ENCODE measurements at regions of chr11 and their contacts with region 1.

Region 1: DNA sequence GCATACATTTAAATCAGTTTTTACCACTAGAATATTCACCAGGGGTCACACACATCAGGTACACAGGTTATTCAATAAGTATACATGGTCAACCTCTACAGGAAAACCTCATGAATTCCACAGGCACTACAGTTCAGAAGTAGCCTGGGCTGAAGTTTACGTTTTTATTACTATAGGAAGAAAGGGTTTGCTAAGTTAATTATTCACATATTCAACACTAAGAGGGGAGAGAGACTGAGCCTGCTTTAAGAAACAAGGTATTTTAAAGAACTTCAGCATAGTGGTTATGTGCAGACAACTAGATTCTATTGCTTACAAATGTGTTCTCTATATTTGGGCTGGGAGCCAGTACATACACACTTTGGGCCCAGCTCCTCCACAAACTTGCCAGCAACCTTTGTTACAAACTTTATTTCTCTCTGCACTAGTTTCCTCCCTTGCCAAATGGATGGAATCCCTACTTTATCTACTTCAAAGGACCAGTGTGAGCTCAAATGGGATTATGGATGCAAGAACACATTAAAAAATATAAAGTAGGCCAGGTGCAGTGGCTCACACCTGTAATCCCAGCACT is 31.9 kb downstream of the IL18BP start:
- DNase-seq: no peak
- ATAC-seq: no peak
- H3K4me3 ChIP-seq: no peak overlapping the region
- H3K27ac ChIP-seq: no peak overlapping the region
- H3K4me1 ChIP-seq: peaks cover 8% of the 10 kb centered on the region
- CTCF ChIP-seq: no peak
- EP300 ChIP-seq: no peak
- POLR2A ChIP-seq: no peak
- RAD21 ChIP-seq: no peak

Region 2: DNA sequence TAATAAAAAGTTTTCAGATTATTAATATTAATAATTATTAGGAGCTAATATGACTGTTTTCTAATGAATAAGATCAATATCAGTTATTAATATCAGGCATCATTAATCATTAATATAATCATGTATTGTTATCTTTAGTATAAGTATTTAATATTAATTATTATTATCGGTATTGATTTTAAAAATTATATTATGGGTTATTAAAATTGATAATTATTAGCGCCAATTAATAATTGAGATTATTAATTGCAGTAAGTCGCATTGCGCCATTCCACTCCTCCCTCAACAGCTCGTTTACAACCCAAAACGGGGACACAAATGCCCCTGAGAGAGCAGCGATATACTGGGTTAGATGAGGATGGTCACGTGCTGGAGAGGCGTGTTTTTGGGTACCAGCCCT is 122.3 kb before region 1 on chr11:
- CTCF ChIA-PET with region 1: no interaction called
- POLR2A ChIA-PET with region 1: no interaction called
- DNase-seq: no peak
- ATAC-seq: no peak
- H3K4me3 ChIP-seq: no peak overlapping the region
- H3K27ac ChIP-seq: no peak overlapping the region
- H3K4me1 ChIP-seq: no peaks in the 10 kb centered on the region
- CTCF ChIP-seq: no peak
- EP300 ChIP-seq: no peak
- POLR2A ChIP-seq: no peak
- RAD21 ChIP-seq: no peak

Region 3: GRCh38 chr11:71934213-71934612 is 96.3 kb before region 1 on chr11:
- CTCF ChIA-PET with region 1: no interaction called
- POLR2A ChIA-PET with region 1: no interaction called
- DNase-seq: no peak
- ATAC-seq: peak; percentile 43 to 55; a peak in 4 of 6 replicates
- H3K4me3 ChIP-seq: no peak overlapping the region
- H3K27ac ChIP-seq: peak overlapping the region; percentile 39 to 83; a peak in 5 of 6 replicates
- H3K4me1 ChIP-seq: peaks cover 94% of the 10 kb centered on the region
- CTCF ChIP-seq: no peak
- EP300 ChIP-seq: no peak
- POLR2A ChIP-seq: no peak
- RAD21 ChIP-seq: no peak

Region 4: DNA sequence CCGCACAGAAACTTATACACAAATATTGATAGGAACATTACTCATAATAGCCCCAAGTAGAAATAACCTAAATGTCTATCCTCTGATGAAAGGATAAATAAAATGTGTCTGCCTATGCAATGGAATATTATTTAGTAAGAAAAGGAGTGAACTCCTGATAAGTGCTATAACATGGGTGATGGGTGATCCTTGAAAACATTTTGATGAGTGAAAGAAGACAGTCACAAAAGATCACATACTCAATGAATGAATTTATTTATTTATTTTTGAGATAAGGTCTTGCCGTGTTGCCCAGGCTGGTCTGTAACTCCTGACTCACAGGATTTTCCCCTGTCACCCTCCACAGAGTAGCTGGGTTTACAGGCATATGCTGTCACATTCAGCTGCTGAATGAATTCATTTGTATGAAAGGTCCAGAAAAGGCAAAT is 84.4 kb before region 1 on chr11:
- CTCF ChIA-PET with region 1: no interaction called
- POLR2A ChIA-PET with region 1: no interaction called
- DNase-seq: peak; percentile 53 to 77
- ATAC-seq: peak; percentile 70 to 75
- H3K4me3 ChIP-seq: no peak overlapping the region
- H3K27ac ChIP-seq: peak overlapping the region; percentile 87 to 92
- H3K4me1 ChIP-seq: peaks cover 84% of the 10 kb centered on the region
- CTCF ChIP-seq: no peak
- EP300 ChIP-seq: peak in 1 of 2 experiments; percentile 38; a peak in 1 of 5 replicates
- POLR2A ChIP-seq: no peak
- RAD21 ChIP-seq: peak; percentile 8; a peak in 1 of 5 replicates

Region 5: DNA sequence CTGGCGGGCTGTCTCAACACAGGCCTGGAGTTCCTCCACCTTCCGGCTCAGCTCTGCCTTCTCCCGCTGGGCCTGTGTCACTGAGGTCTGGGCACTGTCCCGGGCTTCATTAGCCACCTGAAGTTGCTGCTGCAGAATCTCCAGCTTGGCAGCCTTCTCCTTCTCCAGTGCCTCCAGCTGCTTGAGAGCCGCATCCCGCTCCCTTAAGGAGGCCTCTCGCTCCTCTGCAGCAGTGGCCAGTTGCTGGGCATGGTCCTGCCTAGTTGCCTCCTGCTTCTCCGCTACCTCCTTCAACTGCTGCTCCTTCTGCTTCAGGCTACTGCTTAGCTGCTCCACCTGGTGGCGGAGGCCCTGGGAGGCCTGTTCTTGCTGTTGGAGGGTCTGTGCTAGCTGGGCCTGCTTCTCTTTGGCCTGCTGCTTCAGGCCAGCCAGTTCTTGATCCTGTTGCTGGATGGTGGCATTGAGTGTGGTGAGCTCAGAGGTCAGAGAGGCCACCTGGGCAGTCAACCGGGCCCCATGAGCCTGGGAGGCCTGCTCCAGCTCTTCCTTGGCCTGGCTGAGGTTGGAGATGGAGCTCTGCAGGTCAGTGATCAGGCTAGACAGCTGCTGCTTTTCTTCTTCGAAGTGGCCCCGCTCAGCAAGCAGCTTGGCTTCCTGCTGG is 14.9 kb before region 1 on chr11:
- CTCF ChIA-PET with region 1: interaction called, 109 read pairs
- POLR2A ChIA-PET with region 1: interaction called, 3 read pairs
- DNase-seq: peak in 1 of 2 experiments; percentile 49
- ATAC-seq: peak; percentile 48 to 64; a peak in 4 of 6 replicates
- H3K4me3 ChIP-seq: no peak overlapping the region
- H3K27ac ChIP-seq: peak overlapping the region in 1 of 2 experiments; percentile 15; a peak in 1 of 6 replicates
- H3K4me1 ChIP-seq: peaks cover 30% of the 10 kb centered on the region
- CTCF ChIP-seq: peak; percentile 42; the same call in 2 of the 3 replicates
- EP300 ChIP-seq: no peak
- POLR2A ChIP-seq: no peak
- RAD21 ChIP-seq: peak; percentile 32 to 54; a peak in 4 of 5 replicates

Region 6: DNA sequence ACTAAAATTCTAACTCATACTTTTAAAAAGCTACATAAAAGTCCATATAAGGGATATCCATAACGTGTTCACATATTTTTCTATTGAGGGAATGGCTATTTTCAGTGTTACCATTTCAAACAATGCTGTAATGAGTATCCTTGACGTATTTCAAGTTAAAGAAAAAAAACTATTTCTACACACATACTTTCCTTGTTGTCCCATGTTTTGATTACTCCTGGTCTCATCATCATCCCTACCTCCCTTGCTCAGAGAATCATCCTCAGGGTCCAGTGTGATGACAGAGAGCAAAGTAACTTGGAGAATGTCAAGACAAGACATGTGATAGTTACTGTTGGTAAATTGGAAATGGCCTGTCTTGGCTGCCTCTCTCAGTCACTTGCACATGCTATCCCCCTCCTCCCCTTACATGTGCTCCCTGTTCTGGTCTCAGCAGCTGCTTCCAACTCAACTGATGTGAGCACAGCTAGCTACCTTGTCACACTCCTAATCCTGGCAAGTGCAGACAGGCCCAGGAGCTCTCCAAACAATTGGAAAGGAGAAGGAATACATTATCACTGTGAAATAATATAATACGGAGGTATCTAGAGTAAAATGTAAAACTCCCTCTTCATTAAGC is 28.0 kb after region 1 on chr11:
- CTCF ChIA-PET with region 1: interaction called, 15 read pairs
- POLR2A ChIA-PET with region 1: no interaction called
- DNase-seq: no peak
- ATAC-seq: no peak; a peak in 1 of 6 replicates
- H3K4me3 ChIP-seq: no peak overlapping the region
- H3K27ac ChIP-seq: no peak overlapping the region
- H3K4me1 ChIP-seq: no peaks in the 10 kb centered on the region
- CTCF ChIP-seq: no peak
- EP300 ChIP-seq: no peak
- POLR2A ChIP-seq: no peak
- RAD21 ChIP-seq: no peak

Region 7: GRCh38 chr11:72085621-72086351 is 55.2 kb after region 1 on chr11:
- CTCF ChIA-PET with region 1: interaction called, 354 read pairs
- POLR2A ChIA-PET with region 1: interaction called, 6 read pairs
- DNase-seq: no peak
- ATAC-seq: no peak
- H3K4me3 ChIP-seq: no peak overlapping the region
- H3K27ac ChIP-seq: no peak overlapping the region
- H3K4me1 ChIP-seq: peaks cover 9% of the 10 kb centered on the region; the same call in 2 of the 3 replicates
- CTCF ChIP-seq: no peak
- EP300 ChIP-seq: no peak
- POLR2A ChIP-seq: no peak
- RAD21 ChIP-seq: no peak

Region 8: GRCh38 chr11:72189461-72190275 is 159.1 kb after region 1 on chr11:
- CTCF ChIA-PET with region 1: interaction called, 39 read pairs
- POLR2A ChIA-PET with region 1: no interaction called
- DNase-seq: no peak
- ATAC-seq: no peak
- H3K4me3 ChIP-seq: no peak overlapping the region
- H3K27ac ChIP-seq: no peak overlapping the region
- H3K4me1 ChIP-seq: no peaks in the 10 kb centered on the region
- CTCF ChIP-seq: no peak
- EP300 ChIP-seq: no peak
- POLR2A ChIP-seq: no peak
- RAD21 ChIP-seq: no peak

Region 9: DNA sequence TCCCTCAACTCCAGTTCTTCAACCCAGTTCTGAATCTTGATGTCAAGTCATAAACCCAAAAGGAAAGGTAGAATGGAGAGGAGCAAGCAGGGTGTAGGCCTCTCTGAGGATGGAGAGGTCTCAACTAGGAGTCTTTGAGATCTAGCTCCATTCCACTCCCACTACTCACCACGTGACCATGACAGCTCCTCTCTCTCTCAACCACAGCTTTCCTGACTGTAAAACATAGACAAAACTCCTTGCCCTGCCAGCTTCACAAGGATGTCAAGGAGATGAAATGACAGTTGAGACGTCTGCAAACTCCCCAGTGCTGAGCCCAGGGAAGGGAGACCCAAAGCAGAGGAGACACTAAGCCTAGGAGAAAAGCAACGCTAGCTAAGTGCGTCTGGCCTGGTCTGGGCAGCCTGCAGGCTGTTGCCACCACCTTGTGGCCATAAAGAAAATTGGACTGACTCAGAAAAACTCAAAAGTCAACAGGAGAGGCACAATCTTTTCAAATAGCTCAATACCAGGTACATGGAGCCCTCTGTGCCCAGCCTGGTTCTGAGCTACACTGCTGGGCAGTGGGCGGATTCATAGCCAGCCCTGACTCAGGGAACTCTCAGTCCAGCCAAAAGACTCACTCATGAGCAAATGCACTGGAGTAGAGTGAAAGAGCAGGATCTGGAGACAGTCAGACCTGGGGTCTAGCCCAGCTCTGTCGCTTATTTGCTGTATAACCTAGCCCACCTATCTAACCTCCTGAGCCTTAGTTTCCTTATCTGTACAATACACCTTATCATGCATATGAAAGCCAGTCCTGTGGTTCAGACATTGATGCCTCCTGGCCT is 400.4 kb after region 1 on chr11:
- CTCF ChIA-PET with region 1: interaction called, 64 read pairs
- POLR2A ChIA-PET with region 1: no interaction called
- DNase-seq: peak; percentile 64 to 66
- ATAC-seq: peak; percentile 36 to 61; a peak in 5 of 6 replicates
- H3K4me3 ChIP-seq: no peak overlapping the region
- H3K27ac ChIP-seq: no peak overlapping the region
- H3K4me1 ChIP-seq: 0 out of 3 replicates have a peak, but pooled peaks cover 3% of the 10 kb centered on the region
- CTCF ChIP-seq: peak; percentile 78
- EP300 ChIP-seq: no peak
- POLR2A ChIP-seq: no peak
- RAD21 ChIP-seq: peak; percentile 82 to 87

Region 10: GRCh38 chr11:72471005-72471898 is 440.7 kb after region 1 on chr11:
- CTCF ChIA-PET with region 1: no interaction called
- POLR2A ChIA-PET with region 1: no interaction called
- DNase-seq: peak; percentile 66 to 72
- ATAC-seq: peak; percentile 95 to 98
- H3K4me3 ChIP-seq: no peak overlapping the region
- H3K27ac ChIP-seq: no peak overlapping the region
- H3K4me1 ChIP-seq: no peaks in the 10 kb centered on the region
- CTCF ChIP-seq: peak; percentile 83
- EP300 ChIP-seq: no peak
- POLR2A ChIP-seq: no peak
- RAD21 ChIP-seq: peak; percentile 76 to 80

Measured in A549 (cell line).